Activated naive CD4-positive, alpha-beta T cell treated with anti-CD3 and anti-CD28 coated beads, Interleukin-2, amount 10 ng/mL, durations not matched to agents 7 days and 5 days (primary cell): ENCODE measurements at regions of chr1 and their contacts with region 1.

Region 1: DNA sequence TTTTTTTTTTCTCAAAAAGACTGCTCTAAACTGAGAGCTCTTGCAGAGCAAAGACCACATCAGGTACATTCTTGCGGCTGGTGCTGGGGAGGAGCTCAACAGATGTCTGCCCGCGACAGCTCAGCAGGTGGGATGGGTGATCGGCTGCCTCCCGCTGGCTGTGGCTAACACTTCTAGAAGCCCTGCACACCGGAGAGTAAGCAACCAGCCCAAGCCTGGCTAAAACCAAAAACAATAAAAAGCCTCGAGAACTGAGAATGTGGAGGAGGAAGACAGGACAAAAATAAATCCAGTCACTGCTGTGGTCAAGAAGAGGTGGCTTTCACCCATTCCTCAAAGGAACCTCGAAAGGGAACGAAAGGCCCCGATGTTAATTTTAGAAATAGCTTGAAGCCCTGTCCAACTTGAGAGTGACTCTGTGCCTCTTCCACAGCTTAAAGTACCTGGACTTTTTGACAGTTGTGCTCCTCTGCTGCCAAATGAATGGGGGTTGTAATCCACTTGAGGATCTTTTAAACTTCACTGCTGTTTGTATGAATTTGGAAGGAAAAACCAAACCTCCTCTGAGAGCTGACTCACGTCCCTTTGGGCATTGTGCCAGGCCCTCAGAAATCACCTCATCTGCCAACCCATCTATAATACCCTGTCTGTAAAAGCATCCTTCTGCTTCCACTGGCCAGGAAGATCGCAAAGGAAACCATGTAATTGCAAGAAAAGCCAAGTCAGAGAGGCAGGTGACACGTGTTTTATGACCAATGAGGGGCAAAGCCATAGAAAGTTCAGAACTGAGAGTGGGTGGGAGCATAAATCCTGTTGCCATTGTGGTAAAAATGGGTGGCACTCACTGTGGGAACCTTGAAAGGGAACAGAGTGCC is 78.6 kb downstream of the KCNN3 start:
- DNase-seq: peak; percentile 93
- H3K4me3 Mint-ChIP-seq: peak overlapping the region; percentile 1
- H3K27ac Mint-ChIP-seq: peak overlapping the region; percentile 83
- H3K4me1 Mint-ChIP-seq: peaks cover 49% of the 10 kb centered on the region
- H3K27me3 Mint-ChIP-seq: peaks cover 30% of the 10 kb centered on the region

Region 2: DNA sequence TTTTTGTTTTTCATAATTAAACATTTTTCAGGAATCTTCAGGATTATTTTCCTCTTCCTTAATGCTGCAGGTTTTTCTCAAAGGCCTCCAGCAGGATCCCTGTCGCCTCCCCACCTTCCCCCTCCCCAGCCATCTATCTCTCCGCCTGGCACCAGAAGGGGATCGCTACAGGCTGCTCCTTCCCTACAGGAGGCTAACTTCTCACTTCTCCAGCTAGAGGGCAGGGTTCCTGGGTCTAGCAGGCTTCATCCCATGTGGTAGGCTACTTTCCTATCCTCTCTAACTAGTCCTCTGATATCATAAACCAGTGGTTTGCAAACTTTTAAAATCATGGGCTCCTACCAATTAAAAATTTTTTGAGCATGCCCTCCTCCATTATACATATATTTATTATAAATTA is 25.6 kb before region 1 on chr1:
- CTCF ChIA-PET with region 1: interaction called, 16 read pairs
- DNase-seq: peak; percentile 38
- H3K4me3 Mint-ChIP-seq: no peak overlapping the region
- H3K27ac Mint-ChIP-seq: no peak overlapping the region
- H3K4me1 Mint-ChIP-seq: no peaks in the 10 kb centered on the region
- H3K27me3 Mint-ChIP-seq: peaks cover 17% of the 10 kb centered on the region

Region 3: DNA sequence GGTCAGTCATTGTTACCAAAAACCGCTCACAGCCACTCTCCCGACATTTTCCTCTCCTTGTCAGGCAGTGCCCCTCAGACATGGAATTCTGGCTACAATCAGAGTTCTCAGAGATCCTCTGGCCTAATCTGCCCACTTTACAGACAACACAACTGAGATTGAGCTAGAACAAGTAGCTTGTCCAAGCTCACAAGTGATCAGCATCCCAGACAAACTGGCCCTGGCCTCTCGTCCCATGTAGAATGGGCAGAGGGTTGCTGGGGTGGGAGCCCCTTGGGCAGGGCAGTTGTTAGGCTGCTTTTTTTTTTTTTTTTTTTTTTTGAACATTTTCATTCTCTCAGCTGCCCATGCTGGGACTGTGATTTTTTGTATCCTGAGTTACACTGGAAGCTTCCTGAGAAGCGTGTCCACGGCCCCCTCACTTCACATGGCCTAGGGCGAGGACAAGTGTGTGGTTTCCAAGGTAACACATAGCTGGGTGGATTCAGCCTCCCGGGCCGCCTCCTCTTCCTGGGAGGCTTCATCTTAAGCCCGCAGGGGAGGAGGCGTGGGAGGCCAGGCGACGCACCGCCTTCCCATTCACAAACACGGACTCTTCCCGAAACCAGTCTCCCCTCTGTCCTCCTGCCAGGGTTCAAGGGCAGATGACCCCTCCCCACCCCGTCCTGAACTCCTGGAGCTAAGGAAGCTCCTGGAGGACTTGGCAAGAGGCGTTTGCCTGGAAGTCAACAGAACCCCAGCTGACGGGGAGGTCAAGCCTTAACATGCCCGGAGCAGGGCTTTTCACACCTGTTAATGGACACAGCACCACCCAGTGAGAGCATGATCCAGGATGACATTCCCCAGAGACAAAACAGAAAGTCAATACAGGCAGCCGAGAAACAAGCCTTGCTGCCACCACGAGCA is 21.6 kb after region 1 on chr1:
- CTCF ChIA-PET with region 1: no interaction called
- DNase-seq: no peak
- H3K4me3 Mint-ChIP-seq: no peak overlapping the region
- H3K27ac Mint-ChIP-seq: no peak overlapping the region
- H3K4me1 Mint-ChIP-seq: peaks cover 8% of the 10 kb centered on the region
- H3K27me3 Mint-ChIP-seq: peaks cover 35% of the 10 kb centered on the region

Region 4: GRCh38 chr1:154896771-154897391 is 105.4 kb after region 1 on chr1:
- CTCF ChIA-PET with region 1: no interaction called
- DNase-seq: no peak
- H3K4me3 Mint-ChIP-seq: no peak overlapping the region
- H3K27ac Mint-ChIP-seq: no peak overlapping the region
- H3K4me1 Mint-ChIP-seq: peaks cover 4% of the 10 kb centered on the region
- H3K27me3 Mint-ChIP-seq: peaks cover 26% of the 10 kb centered on the region